AG04449 (cell line): ENCODE measurements at regions of chr12 and their contacts with region 1.

Region 1: GRCh38 chr12:5428332-5429221 is 3.3 kb upstream of the NTF3 start:
- DNase-seq: no peak
- H3K4me3 ChIP-seq: peak overlapping the region; percentile 18; the same call in 1 of the 2 replicates
- CTCF ChIP-seq: peak; percentile 62

Region 2: GRCh38 chr12:5022465-5023061 is 406.0 kb before region 1 on chr12:
- CTCF ChIA-PET with region 1: interaction called, 10 read pairs
- POLR2A ChIA-PET with region 1: no interaction called
- DNase-seq: no peak
- H3K4me3 ChIP-seq: no peak overlapping the region
- CTCF ChIP-seq: peak; percentile 92

Region 3: DNA sequence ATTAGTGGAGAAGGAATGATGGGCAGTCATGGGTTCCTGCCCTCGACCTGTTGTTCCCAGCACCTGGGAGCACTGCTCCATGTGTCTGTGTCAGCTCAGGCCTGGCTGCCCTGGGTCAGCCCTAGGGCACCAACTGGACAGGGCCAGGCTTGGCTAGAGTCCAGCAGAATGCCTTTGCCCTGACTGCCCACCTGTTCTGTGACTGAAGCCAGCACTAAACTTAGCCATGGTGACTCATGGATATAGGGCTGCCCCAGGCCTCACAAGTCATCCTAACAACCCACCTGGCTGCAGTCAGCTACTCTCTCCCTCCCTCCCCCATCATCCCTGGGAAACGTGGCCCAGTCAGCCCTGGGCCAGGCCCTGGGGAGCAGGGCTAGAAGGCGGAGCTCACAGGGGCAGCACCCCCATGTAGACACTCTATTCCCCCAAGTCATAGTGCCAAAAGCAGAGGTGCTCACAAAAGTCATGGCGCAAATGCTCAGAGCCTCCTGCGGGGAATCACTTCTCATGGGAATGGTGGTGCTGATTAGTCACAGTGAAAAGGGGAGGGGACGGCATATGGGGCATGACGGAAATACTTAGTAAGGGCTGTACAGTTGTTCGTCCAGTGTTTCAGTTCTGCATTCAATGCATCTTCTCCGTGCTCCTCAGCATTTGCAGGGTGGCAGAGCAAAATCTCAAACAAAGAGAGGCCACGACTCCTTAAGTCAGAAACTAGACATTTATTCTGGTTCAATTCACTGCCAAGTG is 48.7 kb before region 1 on chr12:
- CTCF ChIA-PET with region 1: no interaction called
- POLR2A ChIA-PET with region 1: no interaction called
- DNase-seq: no peak
- H3K4me3 ChIP-seq: no peak overlapping the region
- CTCF ChIP-seq: no peak

Region 4: GRCh38 chr12:5407034-5407856 is 21.3 kb before region 1 on chr12:
- CTCF ChIA-PET with region 1: interaction called, 10 read pairs
- POLR2A ChIA-PET with region 1: no interaction called
- DNase-seq: peak; percentile 36
- H3K4me3 ChIP-seq: no peak overlapping the region
- CTCF ChIP-seq: no peak

Region 5: GRCh38 chr12:5499566-5500330 is 71.2 kb after region 1 on chr12:
- CTCF ChIA-PET with region 1: interaction called, 6 read pairs
- POLR2A ChIA-PET with region 1: interaction called, 12 read pairs
- DNase-seq: peak; percentile 94
- H3K4me3 ChIP-seq: no peak overlapping the region
- CTCF ChIP-seq: no peak

Region 6: GRCh38 chr12:5648692-5649359 is 220.2 kb after region 1 on chr12:
- CTCF ChIA-PET with region 1: interaction called, 89 read pairs
- POLR2A ChIA-PET with region 1: interaction called, 7 read pairs
- DNase-seq: no peak
- H3K4me3 ChIP-seq: no peak overlapping the region
- CTCF ChIP-seq: peak; percentile 69

Region 7: GRCh38 chr12:5796171-5796958 is 367.8 kb after region 1 on chr12:
- CTCF ChIA-PET with region 1: interaction called, 110 read pairs
- POLR2A ChIA-PET with region 1: no interaction called
- DNase-seq: no peak
- H3K4me3 ChIP-seq: no peak overlapping the region
- CTCF ChIP-seq: peak; percentile 90